K562 (cell line): ENCODE measurements at regions of chrX and their contacts with region 1.

Region 1: DNA sequence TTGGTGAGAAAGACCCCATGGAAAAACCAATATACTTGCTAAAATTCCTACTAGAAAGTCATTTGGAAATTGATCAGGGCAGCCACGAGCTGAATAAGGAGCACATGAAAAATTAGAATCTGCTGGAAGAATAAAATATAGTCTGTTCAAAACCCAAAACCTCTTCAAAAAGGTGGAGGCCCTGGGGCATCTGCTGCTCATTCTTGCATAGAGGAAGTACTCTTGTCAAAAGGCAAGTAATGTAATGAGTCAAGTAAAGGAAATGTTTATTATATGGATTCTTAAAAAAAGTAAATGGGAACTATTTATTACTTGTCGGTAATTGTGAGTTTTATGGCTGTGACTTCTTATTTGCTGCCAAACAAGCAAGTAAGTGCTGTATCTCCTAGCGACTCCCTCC is 109.5 kb downstream of the GK start:
- DNase-seq: no peak
- ATAC-seq: no peak
- H3K4me3 ChIP-seq: no peak overlapping the region
- H3K27ac ChIP-seq: no peak overlapping the region
- H3K4me1 ChIP-seq: no peaks in the 10 kb centered on the region
- H3K27me3 ChIP-seq: no peaks in the 10 kb centered on the region; a peak in 1 of 5 replicates
- CTCF ChIP-seq: no peak
- EP300 ChIP-seq: no peak
- POLR2A ChIP-seq: no peak
- RAD21 ChIP-seq: no peak

Region 2: GRCh38 chrX:30822068-30822681 is 59.4 kb after region 1 on chrX:
- CTCF ChIA-PET with region 1: no interaction called
- POLR2A ChIA-PET with region 1: no interaction called
- in situ Hi-C with region 1: loop called (anchors 10 kb)
- intact Hi-C with region 1: no loop called
- DNase-seq: peak in 2 of 4 experiments; percentile 4 to 8
- ATAC-seq: peak; percentile 84
- H3K4me3 ChIP-seq: no peak overlapping the region
- H3K27ac ChIP-seq: no peak overlapping the region
- H3K4me1 ChIP-seq: no peaks in the 10 kb centered on the region
- H3K27me3 ChIP-seq: no peaks in the 10 kb centered on the region; a peak in 1 of 5 replicates
- CTCF ChIP-seq: peak in 2 of 3 experiments; percentile 12 to 28; a peak in 2 of 6 replicates
- EP300 ChIP-seq: no peak
- POLR2A ChIP-seq: no peak
- RAD21 ChIP-seq: peak in 1 of 2 experiments; percentile 39; a peak in 2 of 4 replicates